Left cardiac atrium (tissue), 4 donors: ENCODE measurements at regions of chr9 and their contacts with region 1.

Region 1: GRCh38 chr9:133532937-133533668 is 1.4 kb upstream of the ADAMTSL2 start:
- DNase-seq: peak; percentile 79
- ATAC-seq: peak; percentile 36 to 45

Region 2: GRCh38 chr9:133726401-133727276 is 193.5 kb after region 1 on chr9:
- intact Hi-C with region 1: loop called (anchors 2 to 5 kb)
- DNase-seq: peak; percentile 58
- ATAC-seq: peak; percentile 70 to 72